ENCODE measurements at regions of chr15 and their contacts with region 1.

Region 1: GRCh38 chr15:77075528-77075927 is 4.6 kb upstream of the TSPAN3 start:
- DNase-seq: no peak
- H3K4me3 ChIP-seq: no peak overlapping the region
- H3K27ac ChIP-seq: no peak overlapping the region
- H3K4me1 ChIP-seq: peaks cover 0 to 10% (median 6%) of the 10 kb centered on the region in 4 donors
- H3K27me3 ChIP-seq: no peaks in the 10 kb centered on the region
- CTCF ChIP-seq: peak in 1 of 5 experiments; percentile 22
- EP300 ChIP-seq: no peak
- POLR2A ChIP-seq: no peak

Region 2: DNA sequence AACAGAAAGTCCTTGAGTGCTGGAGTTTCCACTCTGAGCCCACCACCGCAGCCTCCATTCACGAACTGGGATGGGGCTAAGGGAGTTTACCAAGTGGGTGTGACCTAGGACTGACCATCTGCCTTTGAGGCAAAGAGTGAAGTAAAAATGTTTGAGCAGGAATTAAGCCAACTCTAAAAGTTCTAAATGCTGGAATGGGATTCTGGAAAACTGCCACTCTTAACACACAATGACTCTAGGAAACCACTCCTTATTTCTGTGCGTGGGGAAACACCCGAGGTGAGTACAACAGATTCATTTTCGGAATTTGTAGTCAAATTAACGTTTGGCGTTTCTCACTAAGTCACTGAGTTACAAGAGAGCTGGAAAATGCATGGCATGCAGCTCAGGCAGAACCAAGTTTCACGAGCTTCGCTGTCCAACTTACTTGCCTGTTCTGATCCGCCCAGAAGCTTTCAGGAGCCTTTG is 707.4 kb before region 1 on chr15:
- in situ Hi-C with region 1: no loop called
- intact Hi-C with region 1: loop called (anchors 5 kb)
- DNase-seq: peak; percentile 19
- H3K4me3 ChIP-seq: peak overlapping the region in 1 of 4 donors; percentile 11
- H3K27ac ChIP-seq: peak overlapping the region; percentile 19 to 69 (median 50)
- H3K4me1 ChIP-seq: peaks cover 0 to 35% (median 21%) of the 10 kb centered on the region in 4 donors
- H3K27me3 ChIP-seq: no peaks in the 10 kb centered on the region
- CTCF ChIP-seq: no peak
- EP300 ChIP-seq: no peak
- POLR2A ChIP-seq: no peak

Region 3: GRCh38 chr15:77173487-77173886 is 98.0 kb after region 1 on chr15:
- in situ Hi-C with region 1: no loop called
- intact Hi-C with region 1: no loop called
- DNase-seq: no peak
- H3K4me3 ChIP-seq: no peak overlapping the region
- H3K27ac ChIP-seq: peak overlapping the region; percentile 3 to 49 (median 20)
- H3K4me1 ChIP-seq: peaks cover 0 to 19% (median 8%) of the 10 kb centered on the region in 4 donors
- H3K27me3 ChIP-seq: no peaks in the 10 kb centered on the region
- CTCF ChIP-seq: no peak
- EP300 ChIP-seq: no peak
- POLR2A ChIP-seq: no peak

Region 4: GRCh38 chr15:77187751-77188464 is 112.4 kb after region 1 on chr15:
- in situ Hi-C with region 1: no loop called
- intact Hi-C with region 1: no loop called
- DNase-seq: peak; percentile 18
- H3K4me3 ChIP-seq: no peak overlapping the region
- H3K27ac ChIP-seq: peak overlapping the region; percentile 40 to 59 (median 54)
- H3K4me1 ChIP-seq: peaks cover 3 to 43% (median 26%) of the 10 kb centered on the region in 4 donors
- H3K27me3 ChIP-seq: no peaks in the 10 kb centered on the region
- CTCF ChIP-seq: no peak
- EP300 ChIP-seq: no peak
- POLR2A ChIP-seq: no peak